A673 (cell line): ENCODE measurements at regions of chr4 and their contacts with region 1.

Region 1: DNA sequence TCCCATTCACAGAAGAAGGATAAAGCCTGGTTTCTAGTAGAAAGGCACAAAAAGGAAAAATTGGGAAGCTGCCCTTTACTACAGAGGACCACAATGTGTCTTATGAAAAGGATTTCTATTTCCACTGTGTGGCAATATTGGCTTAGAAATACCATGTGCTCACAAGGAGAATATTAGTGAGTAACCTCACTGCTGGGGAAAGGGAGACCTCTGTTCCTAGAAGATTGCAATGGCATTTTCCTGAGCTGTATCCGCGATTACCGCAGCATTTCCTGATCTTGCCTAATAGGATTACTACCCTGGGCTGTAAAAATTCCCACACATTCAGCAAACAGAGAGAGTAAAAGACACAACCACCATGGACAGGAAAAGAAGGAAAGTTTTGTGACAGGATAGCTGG is 308.8 kb upstream of the TECRL start:
- DNase-seq: peak; percentile 76
- H3K4me3 ChIP-seq: no peak overlapping the region
- H3K27ac ChIP-seq: no peak overlapping the region
- H3K4me1 ChIP-seq: no peaks in the 10 kb centered on the region
- H3K27me3 ChIP-seq: no peaks in the 10 kb centered on the region
- CTCF ChIP-seq: peak; percentile 31; the same call in 1 of the 2 replicates

Region 2: GRCh38 chr4:63898961-63899360 is 819.1 kb before region 1 on chr4:
- CTCF ChIA-PET with region 1: no interaction called
- POLR2A ChIA-PET with region 1: no interaction called
- intact Hi-C with region 1: no loop called
- DNase-seq: no peak
- H3K4me3 ChIP-seq: no peak overlapping the region
- H3K27ac ChIP-seq: no peak overlapping the region
- H3K4me1 ChIP-seq: no peaks in the 10 kb centered on the region
- H3K27me3 ChIP-seq: no peaks in the 10 kb centered on the region
- CTCF ChIP-seq: no peak

Region 3: DNA sequence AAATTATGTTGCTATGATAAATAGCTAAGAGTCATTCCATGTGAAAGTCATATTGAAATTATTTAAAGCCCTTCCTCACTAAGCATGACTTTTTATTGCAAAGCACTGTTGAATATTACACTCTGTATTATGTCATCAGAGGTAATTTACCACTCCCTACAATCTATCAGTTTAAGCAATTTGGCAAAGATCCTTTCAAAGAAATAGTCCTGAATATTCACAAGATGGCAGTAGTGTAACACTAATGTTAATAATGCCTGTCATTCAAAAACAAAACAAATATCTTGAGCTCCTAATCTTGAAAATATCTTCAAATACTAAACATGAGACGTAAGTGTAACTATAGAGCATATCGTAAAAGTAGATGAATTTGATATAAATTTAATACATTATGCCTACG is 100.3 kb before region 1 on chr4:
- CTCF ChIA-PET with region 1: interaction called, 3 read pairs
- POLR2A ChIA-PET with region 1: no interaction called
- intact Hi-C with region 1: loop called (anchors 5 kb)
- DNase-seq: peak; percentile 15
- H3K4me3 ChIP-seq: no peak overlapping the region
- H3K27ac ChIP-seq: no peak overlapping the region
- H3K4me1 ChIP-seq: no peaks in the 10 kb centered on the region
- H3K27me3 ChIP-seq: no peaks in the 10 kb centered on the region
- CTCF ChIP-seq: peak; percentile 38; the same call in 1 of the 2 replicates